Stomach (tissue), 19 donors: ENCODE measurements at regions of chr14 and their contacts with region 1.

Region 1: DNA sequence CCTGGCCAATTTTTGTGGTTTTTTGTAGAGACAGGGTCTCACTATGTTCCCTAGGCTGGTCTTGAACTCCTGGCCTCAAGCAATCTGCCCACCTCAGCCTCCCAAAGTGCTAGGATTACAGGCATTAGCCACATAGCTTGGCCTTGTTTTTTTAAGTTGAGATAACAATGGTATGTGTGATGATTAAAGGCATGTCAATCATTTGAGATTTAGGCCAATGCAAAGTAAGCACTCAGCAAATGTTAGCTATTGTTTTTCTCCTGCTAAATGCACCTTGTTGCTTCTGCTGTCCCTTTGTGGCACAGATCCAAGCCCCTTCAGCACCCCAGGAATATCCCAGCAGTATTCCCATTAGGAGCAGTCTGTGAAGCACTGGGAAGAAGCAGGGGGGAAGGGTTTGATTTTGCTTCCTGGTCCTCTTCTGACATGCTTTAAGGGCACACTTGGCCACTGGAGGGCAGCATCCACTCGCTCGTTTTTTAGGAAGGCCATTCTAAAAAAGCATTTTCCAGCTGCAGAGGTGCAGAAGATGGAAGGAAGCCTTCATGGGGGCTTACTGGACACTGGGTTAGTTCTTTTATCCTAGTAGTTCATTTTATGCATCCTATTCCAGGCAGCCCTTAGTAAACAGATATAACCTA is 70.2 kb upstream of the ZFP36L1 start:
- DNase-seq: peak; percentile 83 to 93
- H3K4me3 ChIP-seq: no peak overlapping the region
- H3K27ac ChIP-seq: no peak overlapping the region
- H3K4me1 ChIP-seq: no peaks in the 10 kb centered on the region
- H3K27me3 ChIP-seq: no peaks in the 10 kb centered on the region
- CTCF ChIP-seq: peak in 5 of 7 experiments; percentile 47 to 69 (median 61)
- EP300 ChIP-seq: no peak
- POLR2A ChIP-seq: no peak

Region 2: DNA sequence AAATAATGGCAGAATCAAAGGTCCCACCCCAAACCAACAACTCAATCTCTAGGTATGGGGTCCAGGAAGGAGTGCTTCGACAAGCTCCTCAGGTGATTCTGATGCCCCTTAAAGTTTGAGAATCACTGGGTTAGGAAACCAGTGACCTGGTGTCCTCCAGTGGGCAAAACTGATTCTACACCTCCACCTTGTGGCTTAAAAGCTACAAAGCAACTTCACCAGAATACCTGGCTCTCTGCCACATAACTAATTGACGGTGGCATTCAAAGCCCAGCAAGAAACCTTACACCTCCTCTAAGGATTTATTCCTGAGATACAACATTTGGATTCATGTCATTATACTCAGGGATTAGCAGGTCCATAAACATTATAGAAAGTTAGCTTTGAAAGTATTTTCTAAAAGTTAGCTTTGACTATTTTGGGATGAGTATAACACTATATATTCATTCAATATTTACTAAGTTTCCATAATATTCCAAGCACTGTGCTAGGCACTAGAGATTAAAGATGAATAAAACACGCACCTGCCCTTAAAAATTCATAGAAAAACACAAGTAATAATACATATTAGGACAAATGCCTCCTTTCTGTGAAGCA is 244.4 kb after region 1 on chr14:
- intact Hi-C with region 1: loop called (anchors 5 kb)
- DNase-seq: peak; percentile 36 to 85
- H3K4me3 ChIP-seq: no peak overlapping the region
- H3K27ac ChIP-seq: peak overlapping the region in 1 of 5 donors; percentile 34
- H3K4me1 ChIP-seq: peaks cover 0 to 4% (median 0%) of the 10 kb centered on the region in 4 donors
- H3K27me3 ChIP-seq: no peaks in the 10 kb centered on the region
- CTCF ChIP-seq: peak in 5 of 7 experiments; percentile 51 to 79 (median 58)
- EP300 ChIP-seq: no peak
- POLR2A ChIP-seq: no peak

Region 3: DNA sequence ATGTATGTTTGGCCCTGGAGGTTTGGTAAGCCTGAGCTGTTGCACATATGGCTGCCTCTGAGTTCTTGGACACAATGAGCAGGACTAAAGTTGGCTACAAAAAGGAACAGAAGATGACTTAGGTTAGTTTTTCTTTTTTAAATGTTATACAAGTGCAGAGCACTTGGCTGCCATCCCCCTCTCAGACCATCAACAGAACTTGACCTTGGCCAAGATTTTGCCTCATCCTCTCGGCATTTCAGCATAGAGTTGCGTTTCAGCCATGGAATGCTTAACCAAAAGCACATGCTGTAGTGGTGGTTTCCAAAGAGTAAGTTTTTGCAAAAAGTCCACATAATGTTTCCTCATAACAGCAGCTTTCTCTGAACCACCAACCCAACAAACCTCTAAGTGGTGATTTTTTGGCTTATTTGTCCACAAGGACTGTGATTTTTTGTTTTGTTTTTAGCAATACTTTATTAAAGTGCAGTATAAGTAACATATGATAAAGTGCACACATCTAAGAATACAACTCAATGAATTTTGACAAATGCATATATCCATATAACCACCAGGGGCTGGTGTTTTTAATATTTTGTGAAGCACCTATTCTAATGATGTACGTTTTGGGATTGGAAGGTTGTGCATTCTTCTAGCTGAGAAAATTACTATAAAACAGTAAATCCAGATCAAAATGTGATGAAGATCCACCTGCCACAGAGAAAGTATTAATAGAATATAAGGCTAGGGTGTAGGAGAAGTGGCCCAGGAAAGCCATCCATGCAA is 384.8 kb after region 1 on chr14:
- intact Hi-C with region 1: no loop called
- DNase-seq: peak in 1 of 2 donors; percentile 82
- H3K4me3 ChIP-seq: no peak overlapping the region
- H3K27ac ChIP-seq: peak overlapping the region in 4 of 5 donors; percentile 41 to 67 (median 57)
- H3K4me1 ChIP-seq: peaks cover 0 to 12% (median 2%) of the 10 kb centered on the region in 4 donors
- H3K27me3 ChIP-seq: no peaks in the 10 kb centered on the region
- CTCF ChIP-seq: peak in 2 of 7 experiments; percentile 11 to 29
- EP300 ChIP-seq: no peak
- POLR2A ChIP-seq: no peak